Activated CD4-positive, alpha-beta T cell treated with anti-CD3 and anti-CD28 coated beads for 36 hours (primary cell): ENCODE measurements at regions of chr11 and their contacts with region 1.

Region 1: DNA sequence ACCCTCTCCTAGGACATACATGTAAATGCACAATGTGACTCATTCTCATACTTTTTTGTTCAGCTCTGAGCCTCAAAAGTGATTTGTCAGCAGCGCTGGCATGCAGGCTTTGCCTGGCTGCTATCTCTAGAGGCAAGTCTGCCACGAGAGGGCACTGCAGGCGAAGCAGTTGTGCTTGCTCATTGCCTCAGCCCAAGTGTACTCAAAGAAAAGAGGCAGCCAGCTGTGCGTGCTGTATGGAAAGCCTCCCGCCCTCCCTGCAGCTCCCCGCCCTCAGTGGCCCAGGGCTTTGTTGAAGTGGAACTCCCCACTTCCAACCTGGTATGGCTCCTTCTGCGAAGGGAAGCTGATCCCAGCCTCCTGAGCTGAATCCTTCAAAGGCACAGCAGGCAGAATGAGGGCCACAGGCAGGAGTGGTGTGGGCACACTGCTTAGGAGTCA is 16.3 kb downstream of the SDHAF2 start:
- DNase-seq: peak; percentile 95
- ATAC-seq: peak; percentile 87
- H3K4me3 Mint-ChIP-seq: no peak overlapping the region
- H3K27ac Mint-ChIP-seq: peak overlapping the region; percentile 44
- H3K4me1 Mint-ChIP-seq: peaks cover 35% of the 10 kb centered on the region
- H3K27me3 Mint-ChIP-seq: no peaks in the 10 kb centered on the region

Region 2: GRCh38 chr11:60739114-60739513 is 707.1 kb before region 1 on chr11:
- CTCF ChIA-PET with region 1: no interaction called
- POLR2A ChIA-PET with region 1: no interaction called
- intact Hi-C with region 1: no loop called
- DNase-seq: no peak
- ATAC-seq: no peak
- H3K4me3 Mint-ChIP-seq: no peak overlapping the region
- H3K27ac Mint-ChIP-seq: no peak overlapping the region
- H3K4me1 Mint-ChIP-seq: no peaks in the 10 kb centered on the region
- H3K27me3 Mint-ChIP-seq: peaks cover 3% of the 10 kb centered on the region

Region 3: GRCh38 chr11:61347916-61348461 is 98.2 kb before region 1 on chr11:
- CTCF ChIA-PET with region 1: no interaction called
- POLR2A ChIA-PET with region 1: no interaction called
- intact Hi-C with region 1: no loop called
- DNase-seq: no peak
- ATAC-seq: no peak
- H3K4me3 Mint-ChIP-seq: no peak overlapping the region
- H3K27ac Mint-ChIP-seq: no peak overlapping the region
- H3K4me1 Mint-ChIP-seq: no peaks in the 10 kb centered on the region
- H3K27me3 Mint-ChIP-seq: no peaks in the 10 kb centered on the region

Region 4: GRCh38 chr11:61460474-61460881 is 14.2 kb after region 1 on chr11:
- CTCF ChIA-PET with region 1: interaction called, 11 read pairs
- POLR2A ChIA-PET with region 1: no interaction called
- intact Hi-C with region 1: no loop called
- DNase-seq: no peak
- ATAC-seq: no peak
- H3K4me3 Mint-ChIP-seq: no peak overlapping the region
- H3K27ac Mint-ChIP-seq: no peak overlapping the region
- H3K4me1 Mint-ChIP-seq: no peaks in the 10 kb centered on the region
- H3K27me3 Mint-ChIP-seq: no peaks in the 10 kb centered on the region

Region 5: GRCh38 chr11:61488651-61489291 is 42.5 kb after region 1 on chr11:
- CTCF ChIA-PET with region 1: interaction called, 13 read pairs
- POLR2A ChIA-PET with region 1: no interaction called
- intact Hi-C with region 1: no loop called
- DNase-seq: no peak
- ATAC-seq: no peak
- H3K4me3 Mint-ChIP-seq: no peak overlapping the region
- H3K27ac Mint-ChIP-seq: no peak overlapping the region
- H3K4me1 Mint-ChIP-seq: no peaks in the 10 kb centered on the region
- H3K27me3 Mint-ChIP-seq: no peaks in the 10 kb centered on the region

Region 6: DNA sequence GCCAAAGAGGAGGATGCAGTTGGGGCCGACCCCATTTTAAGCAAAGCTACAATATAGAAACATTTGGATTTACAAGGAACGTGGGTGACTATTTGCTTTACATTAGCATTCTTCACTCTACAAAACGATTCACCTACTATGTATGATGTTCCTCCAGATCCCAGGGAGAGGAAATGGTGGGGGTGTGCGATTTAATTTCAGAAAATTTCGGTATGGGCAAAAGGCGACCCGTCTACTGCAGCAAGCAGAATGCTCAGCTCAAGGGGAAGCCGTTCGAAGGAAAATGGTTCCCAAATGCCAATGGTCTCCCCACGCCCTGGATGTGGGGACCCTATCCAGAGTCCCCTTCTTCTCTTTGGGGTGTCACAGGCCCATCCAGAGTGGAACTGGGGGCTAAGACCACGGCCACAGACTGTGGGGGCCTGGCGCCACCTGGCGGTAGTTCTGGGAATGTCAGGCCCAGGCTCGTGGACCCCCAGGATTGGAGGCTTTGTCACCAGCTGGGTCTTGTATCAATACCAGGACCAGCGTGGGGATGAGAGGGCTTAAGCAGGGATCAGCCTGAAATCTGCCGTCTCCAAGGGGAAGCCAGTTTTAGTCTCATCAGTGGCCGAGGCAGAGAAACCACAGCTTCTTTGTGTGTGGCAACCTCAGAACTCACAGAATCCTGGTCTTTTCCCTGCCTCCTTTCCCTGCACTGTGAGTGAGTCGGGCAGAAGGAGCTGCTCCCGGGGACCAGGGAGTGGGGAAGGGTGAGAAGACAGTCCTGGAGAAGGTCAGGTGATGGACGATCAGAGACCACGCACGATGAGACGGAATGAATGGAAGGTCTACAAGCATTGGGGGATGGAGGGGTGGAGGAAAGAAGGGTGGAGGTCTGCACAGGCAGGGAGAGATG is 70.7 kb after region 1 on chr11:
- CTCF ChIA-PET with region 1: interaction called, 84 read pairs
- POLR2A ChIA-PET with region 1: no interaction called
- intact Hi-C with region 1: loop called (anchors 1 kb)
- DNase-seq: peak; percentile 72
- ATAC-seq: peak; percentile 69
- H3K4me3 Mint-ChIP-seq: peak overlapping the region; percentile 2
- H3K27ac Mint-ChIP-seq: no peak overlapping the region
- H3K4me1 Mint-ChIP-seq: peaks cover 6% of the 10 kb centered on the region
- H3K27me3 Mint-ChIP-seq: peaks cover 15% of the 10 kb centered on the region

Region 7: DNA sequence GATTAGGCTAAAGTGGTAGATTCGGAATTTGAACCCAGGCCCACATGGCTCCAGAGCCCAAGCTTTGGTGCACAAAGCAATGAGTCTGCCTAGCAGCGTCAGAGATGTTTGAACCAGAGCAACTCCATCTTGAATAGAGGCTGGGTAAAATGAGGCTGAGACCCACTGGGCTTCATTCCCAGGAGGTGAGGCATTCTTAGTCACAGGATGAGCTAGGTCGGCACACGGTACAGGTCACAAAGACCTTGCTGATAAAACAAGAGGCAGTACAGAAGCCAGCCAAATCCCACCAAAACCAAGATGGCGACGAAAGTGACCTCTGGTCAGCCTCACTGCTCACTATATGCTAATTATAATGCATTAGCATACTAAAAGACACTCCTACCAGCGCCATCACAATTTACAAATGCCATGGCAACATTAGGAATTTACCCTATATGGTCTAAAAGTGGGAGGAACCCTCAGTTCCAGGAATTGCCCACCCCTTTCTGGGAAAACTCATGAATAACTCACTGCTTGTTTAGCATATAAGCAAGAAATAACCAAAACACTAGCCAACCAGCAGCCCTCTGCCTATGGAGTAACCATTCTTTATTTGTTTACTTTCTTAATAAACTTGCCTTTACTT is 193.7 kb after region 1 on chr11:
- CTCF ChIA-PET with region 1: interaction called, 13 read pairs
- POLR2A ChIA-PET with region 1: no interaction called
- intact Hi-C with region 1: no loop called
- DNase-seq: peak; percentile 15
- ATAC-seq: no peak
- H3K4me3 Mint-ChIP-seq: no peak overlapping the region
- H3K27ac Mint-ChIP-seq: no peak overlapping the region
- H3K4me1 Mint-ChIP-seq: no peaks in the 10 kb centered on the region
- H3K27me3 Mint-ChIP-seq: no peaks in the 10 kb centered on the region